ENCODE measurements at regions of chr2 and their contacts with region 1.

Region 1: GRCh38 chr2:201432038-201432620 is 19.1 kb downstream of the TRAK2 start:
- DNase-seq: no peak
- CTCF ChIP-seq: no peak

Region 2: GRCh38 chr2:201118121-201118960 is 313.8 kb before region 1 on chr2:
- CTCF ChIA-PET with region 1: no interaction called
- POLR2A ChIA-PET with region 1: no interaction called
- DNase-seq: peak; percentile 73
- CTCF ChIP-seq: peak; percentile 39

Region 3: DNA sequence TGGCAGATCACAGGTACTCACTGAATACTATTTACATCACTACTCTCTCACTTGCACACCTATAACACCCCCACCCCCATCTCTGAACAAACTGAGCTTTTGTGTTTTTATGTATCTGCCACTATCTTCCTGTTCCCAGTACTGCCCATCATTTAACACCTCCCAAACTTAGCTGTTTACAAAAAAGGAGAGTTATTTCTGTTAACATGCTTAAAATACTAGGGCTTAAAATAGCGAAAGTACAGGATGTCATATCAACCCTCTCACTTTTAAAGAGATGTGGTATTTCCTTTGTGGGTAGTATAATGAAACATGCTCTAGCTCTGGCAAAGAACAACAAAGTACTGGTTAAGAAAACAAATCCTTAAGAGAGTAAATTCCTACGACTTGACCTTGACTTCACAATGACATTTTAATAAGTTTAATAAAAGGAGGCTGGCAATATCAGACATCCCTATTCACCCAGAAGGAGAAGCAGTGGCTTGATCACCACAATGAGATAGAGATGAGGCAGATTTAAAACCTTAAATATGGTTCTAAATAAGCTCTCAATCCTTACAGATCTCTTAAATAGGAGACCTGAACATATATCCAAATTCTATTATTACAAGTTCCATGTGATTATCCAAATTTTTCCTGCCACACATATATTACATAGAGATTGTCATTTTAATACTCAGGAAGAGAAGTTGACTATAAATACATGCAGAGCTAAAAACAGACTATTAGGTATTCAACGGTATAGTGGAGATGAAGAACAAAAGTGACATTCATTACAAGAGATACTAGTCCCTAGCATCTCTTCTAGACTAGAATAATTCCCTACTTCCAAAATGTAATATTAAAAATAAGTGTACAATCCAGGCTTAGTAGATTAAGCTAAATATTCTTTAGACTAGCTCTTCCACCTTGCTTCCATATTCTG is 17.8 kb before region 1 on chr2:
- CTCF ChIA-PET with region 1: no interaction called
- POLR2A ChIA-PET with region 1: no interaction called
- DNase-seq: peak; percentile 27
- CTCF ChIP-seq: no peak

Region 4: GRCh38 chr2:201444746-201445465 is 12.8 kb after region 1 on chr2:
- CTCF ChIA-PET with region 1: interaction called, 15 read pairs
- POLR2A ChIA-PET with region 1: no interaction called
- DNase-seq: no peak
- CTCF ChIP-seq: no peak

Region 5: DNA sequence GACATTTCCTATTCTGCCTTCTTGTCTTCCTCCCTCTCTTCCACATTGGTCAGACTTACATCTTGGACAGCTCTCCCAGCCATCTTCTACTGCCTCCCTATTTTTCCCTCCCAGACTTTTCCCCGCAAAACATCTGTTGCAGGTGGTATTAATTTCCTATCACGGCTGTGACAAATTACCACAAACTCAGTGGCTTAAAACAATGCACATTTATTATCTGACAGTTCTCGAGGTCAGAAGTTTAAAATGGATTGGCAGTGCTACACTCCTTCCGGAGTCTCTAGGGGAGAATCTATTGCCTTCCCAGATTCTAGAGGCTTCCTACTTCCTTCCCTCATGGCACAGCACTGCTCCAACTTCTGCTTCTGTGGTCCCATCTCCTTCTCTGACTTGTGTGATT is 52.7 kb after region 1 on chr2:
- CTCF ChIA-PET with region 1: no interaction called
- POLR2A ChIA-PET with region 1: no interaction called
- DNase-seq: no peak
- CTCF ChIP-seq: no peak

Measured in GM10248 (cell line).